Mammary epithelial cell (primary cell): ENCODE measurements at regions of chr6 and their contacts with region 1.

Region 1: DNA sequence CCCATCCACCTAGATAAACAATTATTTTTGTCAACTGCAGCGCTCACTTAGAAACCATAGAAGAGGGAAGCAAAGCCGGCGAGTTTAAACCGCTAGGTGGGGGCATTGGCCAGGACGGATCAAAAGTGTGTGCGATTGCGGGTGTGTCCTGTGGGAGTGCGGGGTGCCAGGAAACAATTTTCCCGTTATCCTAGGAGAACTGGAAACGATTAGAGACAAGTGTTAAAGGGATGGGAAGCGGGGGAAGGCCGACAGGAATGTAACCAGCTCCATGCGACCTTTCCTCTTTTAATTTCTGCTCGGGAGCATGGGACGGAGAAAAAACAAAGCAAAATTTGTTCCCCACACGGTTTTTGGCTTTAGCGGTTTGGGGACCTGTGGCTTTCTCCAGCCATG is 2.8 kb upstream of the HTR1B start:
- DNase-seq: peak; percentile 61
- H3K4me3 ChIP-seq: peak overlapping the region; percentile 53 to 74 (median 60)
- H3K27ac ChIP-seq: no peak overlapping the region
- H3K4me1 ChIP-seq: peaks cover 32% of the 10 kb centered on the region
- H3K27me3 ChIP-seq: no peaks in the 10 kb centered on the region
- CTCF ChIP-seq: peak; percentile 74 to 92

Region 2: GRCh38 chr6:77502981-77503380 is 36.9 kb after region 1 on chr6:
- CTCF ChIA-PET with region 1: no interaction called
- dilution Hi-C with region 1: no loop called
- in situ Hi-C with region 1: no loop called
- intact Hi-C with region 1: loop called (anchors 2 kb)
- DNase-seq: peak; percentile 94
- H3K4me3 ChIP-seq: no peak overlapping the region
- H3K27ac ChIP-seq: peak overlapping the region; percentile 6
- H3K4me1 ChIP-seq: no peaks in the 10 kb centered on the region
- H3K27me3 ChIP-seq: no peaks in the 10 kb centered on the region
- CTCF ChIP-seq: no peak

Region 3: DNA sequence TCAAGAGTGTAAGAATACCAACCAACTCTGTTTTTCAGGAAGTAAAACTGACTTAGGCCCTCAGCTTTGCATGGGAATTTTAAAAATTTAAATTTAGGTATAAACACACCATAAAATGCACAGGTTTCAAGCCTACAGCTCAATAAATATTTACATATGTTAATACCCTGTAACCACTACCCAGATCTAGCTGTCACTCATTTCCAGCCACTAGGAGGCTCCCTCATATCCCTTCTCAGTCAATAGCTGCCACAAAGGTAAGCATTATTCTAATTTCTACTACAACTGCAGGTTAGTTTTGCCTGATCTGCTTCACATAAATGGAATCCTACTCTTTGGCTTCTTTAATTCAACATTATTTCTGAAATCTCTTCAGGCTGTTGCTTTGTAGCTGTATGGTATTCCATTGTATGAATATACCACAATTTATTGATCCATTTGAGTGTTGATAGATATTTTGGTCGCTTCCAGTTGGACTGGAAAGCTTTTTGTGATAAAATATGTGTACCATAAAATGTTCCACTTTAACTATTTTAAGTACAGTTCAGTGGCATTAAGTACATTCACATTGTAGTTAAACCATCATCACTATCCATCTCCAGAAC is 154.3 kb after region 1 on chr6:
- CTCF ChIA-PET with region 1: interaction called, 6 read pairs
- dilution Hi-C with region 1: no loop called
- in situ Hi-C with region 1: no loop called
- intact Hi-C with region 1: loop called (anchors 2 kb)
- DNase-seq: peak; percentile 10
- H3K4me3 ChIP-seq: no peak overlapping the region
- H3K27ac ChIP-seq: no peak overlapping the region
- H3K4me1 ChIP-seq: no peaks in the 10 kb centered on the region
- H3K27me3 ChIP-seq: no peaks in the 10 kb centered on the region
- CTCF ChIP-seq: peak; percentile 65 to 68

Region 4: GRCh38 chr6:78308025-78308424 is 842.0 kb after region 1 on chr6:
- CTCF ChIA-PET with region 1: no interaction called
- dilution Hi-C with region 1: no loop called
- in situ Hi-C with region 1: no loop called
- intact Hi-C with region 1: loop called (anchors 10 kb)
- DNase-seq: no peak
- H3K4me3 ChIP-seq: no peak overlapping the region
- H3K27ac ChIP-seq: no peak overlapping the region
- H3K4me1 ChIP-seq: no peaks in the 10 kb centered on the region
- H3K27me3 ChIP-seq: no peaks in the 10 kb centered on the region
- CTCF ChIP-seq: peak; percentile 25 to 29

Region 5: DNA sequence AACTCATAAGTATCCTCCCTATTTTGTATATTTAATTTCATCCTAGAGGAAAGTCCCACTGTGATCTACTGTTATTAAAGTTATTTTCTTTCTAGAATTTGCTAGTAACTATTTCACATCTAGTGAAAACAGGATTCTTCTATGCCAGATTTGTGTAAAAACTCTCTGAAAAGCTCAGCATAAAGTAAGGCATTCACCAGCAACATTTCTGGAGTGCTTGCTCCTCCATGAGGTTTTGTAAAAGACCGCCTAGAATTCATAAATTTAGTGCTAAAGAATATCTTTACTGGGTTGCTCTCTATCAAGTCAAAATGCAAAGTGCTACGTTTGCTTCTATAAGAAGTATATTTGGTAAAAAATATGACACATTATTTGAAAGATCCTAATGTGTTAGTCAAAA is 1227.8 kb after region 1 on chr6:
- CTCF ChIA-PET with region 1: no interaction called
- dilution Hi-C with region 1: no loop called
- in situ Hi-C with region 1: no loop called
- intact Hi-C with region 1: loop called (anchors 10 kb)
- DNase-seq: no peak
- H3K4me3 ChIP-seq: no peak overlapping the region
- H3K27ac ChIP-seq: no peak overlapping the region
- H3K4me1 ChIP-seq: no peaks in the 10 kb centered on the region
- H3K27me3 ChIP-seq: peaks cover 2% of the 10 kb centered on the region
- CTCF ChIP-seq: no peak